Tibial artery (tissue), 4 donors: ENCODE measurements at regions of chr13 and their contacts with region 1.

Region 1: DNA sequence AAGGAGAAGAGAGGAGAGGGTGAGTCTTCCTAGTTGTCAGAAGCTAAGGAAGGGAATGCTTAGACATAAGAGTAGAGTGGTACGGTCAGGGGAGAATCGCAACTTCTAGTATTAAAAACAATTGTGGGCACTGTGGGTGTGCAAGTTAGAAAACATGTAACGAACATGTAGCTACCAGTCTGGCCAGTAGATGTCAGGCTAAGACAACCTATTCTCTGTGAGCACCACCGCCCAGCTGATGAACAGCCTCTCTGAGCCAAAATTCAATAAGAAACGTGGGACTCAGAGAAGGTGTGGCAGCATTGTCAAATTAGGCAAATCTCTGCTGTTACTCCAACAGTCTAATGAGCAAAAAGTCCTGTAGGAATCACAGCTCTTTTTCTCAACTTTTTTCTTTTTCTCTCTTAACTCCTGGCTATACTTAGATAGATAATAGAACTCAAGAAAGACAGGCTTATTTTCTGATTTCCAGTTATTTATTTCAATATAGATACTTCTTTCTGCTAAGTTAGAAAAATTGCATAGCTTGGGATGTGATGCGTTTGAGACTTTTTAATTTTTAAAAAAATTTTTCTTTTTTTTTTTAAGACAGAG is 186.2 kb downstream of the USP12 start:
- DNase-seq: peak; percentile 76 to 79
- H3K4me3 ChIP-seq: no peak overlapping the region
- H3K27ac ChIP-seq: peak overlapping the region in 1 of 2 donors; percentile 75
- H3K4me1 ChIP-seq: peaks cover 0 to 31% (median 9%) of the 10 kb centered on the region in 4 donors
- H3K27me3 ChIP-seq: peaks cover 0 to 2% of the 10 kb centered on the region in 2 donors
- CTCF ChIP-seq: peak; percentile 72 to 91

Region 2: DNA sequence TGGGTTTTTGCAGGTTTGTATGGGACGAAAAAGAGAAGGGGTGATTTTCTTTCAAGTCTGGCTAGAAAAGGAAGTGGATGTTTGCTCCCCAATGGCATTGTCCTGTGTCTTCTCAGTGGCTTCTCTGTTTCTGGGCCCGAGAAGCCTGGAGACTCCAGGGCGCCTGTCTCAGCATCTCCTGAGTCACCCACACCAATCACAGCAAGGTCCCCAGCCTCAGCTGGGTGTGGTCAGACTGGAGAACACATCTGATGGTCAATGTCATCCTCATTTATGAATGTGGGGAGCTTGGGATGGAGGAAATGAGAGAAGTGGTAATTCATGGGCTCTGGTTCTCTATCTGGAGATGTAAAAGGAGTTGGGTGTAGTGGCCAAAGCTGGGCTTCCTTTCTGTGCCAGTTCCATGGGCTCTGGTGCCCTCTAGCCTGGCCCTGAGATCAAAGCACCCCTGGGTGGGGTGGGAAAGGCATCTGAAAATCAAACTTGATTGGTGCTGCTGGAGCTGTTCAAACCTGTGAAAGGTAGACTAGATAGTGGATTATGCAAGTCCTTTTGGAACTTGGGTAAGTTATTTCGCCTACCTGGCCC is 298.6 kb after region 1 on chr13:
- intact Hi-C with region 1: loop called (anchors 2 kb)
- DNase-seq: peak in 1 of 2 donors; percentile 37
- H3K4me3 ChIP-seq: no peak overlapping the region
- H3K27ac ChIP-seq: no peak overlapping the region
- H3K4me1 ChIP-seq: peaks cover 0 to 13% (median under 1%) of the 10 kb centered on the region in 4 donors
- H3K27me3 ChIP-seq: no peaks in the 10 kb centered on the region
- CTCF ChIP-seq: peak; percentile 41 to 55